Ascending aorta (tissue), 2 donors: ENCODE measurements at regions of chr19 and their contacts with region 1.

Region 1: GRCh38 chr19:44212250-44212865 is at the start of gene ZNF227:
- DNase-seq: peak; percentile 71 to 97
- H3K4me3 ChIP-seq: peak within 1 kb of the TSS; percentile 70 to 71
- H3K27ac ChIP-seq: peak within 1 kb of the TSS; percentile 73 to 78
- H3K4me1 ChIP-seq: no peaks in the 10 kb centered on the region
- H3K27me3 ChIP-seq: no peaks in the 10 kb centered on the region
- CTCF ChIP-seq: no peak
- total RNA-seq, gene ZNF227: 7.1 TPM

Region 2: DNA sequence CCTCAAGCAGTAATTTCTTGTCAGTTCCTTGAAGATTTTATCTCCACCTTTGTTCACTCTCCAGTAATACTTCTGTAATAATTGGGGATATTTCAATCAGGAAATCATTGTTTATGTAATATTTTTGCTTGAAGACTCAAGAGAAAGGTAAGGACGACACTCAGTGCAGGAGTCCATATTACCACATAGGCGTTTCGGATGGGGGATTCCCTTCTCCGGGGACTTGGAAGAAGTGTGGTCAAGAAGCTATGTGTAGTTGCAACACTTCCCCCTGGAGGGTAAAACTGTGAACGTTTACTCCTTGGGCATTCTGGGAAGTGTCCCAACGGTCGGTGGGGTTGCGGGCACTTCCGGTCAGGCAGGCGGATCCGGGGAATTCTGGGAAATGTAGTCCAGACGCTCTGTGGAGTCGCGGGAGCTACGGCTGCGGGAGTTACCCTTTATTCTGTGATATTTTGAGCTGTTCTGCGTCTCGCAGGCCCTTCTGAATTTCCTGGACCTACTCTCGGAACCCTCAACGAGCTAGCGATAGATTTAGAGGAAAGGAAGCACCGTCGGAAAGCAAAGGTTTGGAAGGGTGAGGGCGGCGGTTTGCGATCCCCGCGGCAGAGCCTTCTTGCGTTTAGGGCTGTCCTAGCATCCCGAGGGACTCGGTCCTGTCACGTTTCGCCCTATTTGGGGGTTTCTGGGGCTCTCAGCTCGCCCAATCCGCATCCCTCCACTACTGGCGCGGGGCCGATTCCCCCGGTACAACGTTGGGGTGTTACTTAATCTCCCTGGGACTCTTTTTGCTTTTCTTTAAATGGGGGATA is 261.3 kb before region 1 on chr19 and contains the start of gene ZNF221:
- intact Hi-C with region 1: loop called (anchors 5 kb)
- DNase-seq: peak; percentile 58 to 94
- H3K4me3 ChIP-seq: peak within 1 kb of the TSS; percentile 72 to 88
- H3K27ac ChIP-seq: peak within 1 kb of the TSS; percentile 57 to 73
- H3K4me1 ChIP-seq: no peaks in the 10 kb centered on the region
- H3K27me3 ChIP-seq: no peaks in the 10 kb centered on the region
- CTCF ChIP-seq: peak; percentile 22 to 52 (median 47)
- total RNA-seq, gene ZNF221: 2.6 TPM

Region 3: GRCh38 chr19:44093931-44094765 is 118.2 kb before region 1 on chr19 and contains the start of gene ZNF224:
- intact Hi-C with region 1: loop called (anchors 5 kb)
- DNase-seq: peak; percentile 66 to 95
- H3K4me3 ChIP-seq: peak within 1 kb of the TSS; percentile 80 to 86
- H3K27ac ChIP-seq: peak within 1 kb of the TSS; percentile 66 to 67
- H3K4me1 ChIP-seq: no peaks in the 10 kb centered on the region
- H3K27me3 ChIP-seq: no peaks in the 10 kb centered on the region
- CTCF ChIP-seq: no peak
- total RNA-seq, gene ZNF224: 119 TPM

Region 4: DNA sequence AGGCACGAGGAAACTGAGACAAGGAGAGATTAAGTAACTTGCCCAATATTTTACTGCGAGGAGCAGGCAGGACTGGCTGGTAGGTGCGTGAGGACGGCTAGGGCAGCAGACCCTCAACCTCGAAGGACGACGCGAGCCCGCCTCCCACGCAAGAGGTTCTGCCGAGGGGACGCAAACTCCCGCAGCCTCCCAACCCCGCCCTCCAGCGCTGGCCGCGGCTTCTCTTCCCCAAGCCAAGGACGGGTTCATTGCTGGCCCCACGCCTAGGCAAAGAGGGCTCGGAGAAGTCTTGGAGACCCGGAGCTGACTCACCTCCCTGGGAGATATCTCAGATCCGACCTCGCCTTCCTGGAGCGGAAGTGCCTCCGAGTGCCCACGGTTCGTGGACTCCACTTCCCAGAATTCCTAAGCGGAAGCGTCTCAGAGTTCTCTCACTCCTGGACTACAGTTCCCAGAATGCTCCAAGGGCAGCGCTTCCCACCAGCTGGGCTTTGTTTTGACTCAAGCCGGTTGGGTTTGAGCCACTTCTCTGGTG is 92.4 kb after region 1 on chr19 and contains the start of gene ZNF235:
- intact Hi-C with region 1: loop called (anchors 1 kb)
- DNase-seq: peak; percentile 74 to 96
- H3K4me3 ChIP-seq: peak within 1 kb of the TSS; percentile 81 to 83
- H3K27ac ChIP-seq: peak within 1 kb of the TSS; percentile 76 to 83
- H3K4me1 ChIP-seq: no peaks in the 10 kb centered on the region
- H3K27me3 ChIP-seq: no peaks in the 10 kb centered on the region
- CTCF ChIP-seq: no peak
- total RNA-seq, gene ZNF235: 6.6 TPM